Posterior vena cava (tissue), 2 donors: ENCODE measurements at regions of chr1 and their contacts with region 1.

Region 1: DNA sequence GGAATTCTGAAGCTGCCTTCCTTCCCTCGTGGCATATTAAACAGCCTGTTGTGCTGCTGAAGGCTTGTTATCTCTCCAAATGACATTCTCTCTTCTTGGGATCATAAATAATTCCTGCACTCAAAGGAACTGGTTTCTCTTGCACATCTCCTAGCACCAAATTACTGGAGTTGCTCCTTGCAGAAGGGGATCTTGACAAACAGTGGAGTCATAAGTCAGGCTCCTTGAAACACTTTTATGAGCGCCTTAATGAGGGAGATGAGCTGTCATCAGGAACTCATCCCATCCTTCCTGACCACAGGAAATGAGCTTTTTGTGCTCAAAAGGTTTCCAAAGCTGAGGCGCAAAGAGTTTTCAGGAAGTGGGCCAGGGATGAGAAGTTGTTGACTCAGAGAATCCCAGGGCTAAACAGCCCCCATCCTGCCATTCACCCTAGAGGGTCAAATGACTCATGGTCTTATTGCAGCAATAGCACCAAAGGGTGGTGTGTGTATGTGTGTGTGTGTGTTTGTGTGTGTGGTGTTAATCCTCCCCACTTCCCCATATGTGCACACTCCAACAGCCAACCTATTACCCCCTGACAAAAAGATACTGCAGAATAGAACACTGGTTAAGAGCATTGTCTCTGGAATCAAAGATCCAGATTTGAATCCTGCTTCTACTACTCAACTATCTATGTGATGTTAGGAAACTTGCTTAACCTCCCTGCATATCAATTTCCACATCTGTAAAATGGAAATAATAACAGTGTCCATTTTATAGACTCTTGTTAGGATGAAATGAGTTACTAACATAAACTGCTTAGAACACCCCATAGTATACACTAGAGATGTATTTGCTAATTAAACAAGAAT is 2.8 kb upstream of the PHC2 start:
- DNase-seq: no peak

Region 2: DNA sequence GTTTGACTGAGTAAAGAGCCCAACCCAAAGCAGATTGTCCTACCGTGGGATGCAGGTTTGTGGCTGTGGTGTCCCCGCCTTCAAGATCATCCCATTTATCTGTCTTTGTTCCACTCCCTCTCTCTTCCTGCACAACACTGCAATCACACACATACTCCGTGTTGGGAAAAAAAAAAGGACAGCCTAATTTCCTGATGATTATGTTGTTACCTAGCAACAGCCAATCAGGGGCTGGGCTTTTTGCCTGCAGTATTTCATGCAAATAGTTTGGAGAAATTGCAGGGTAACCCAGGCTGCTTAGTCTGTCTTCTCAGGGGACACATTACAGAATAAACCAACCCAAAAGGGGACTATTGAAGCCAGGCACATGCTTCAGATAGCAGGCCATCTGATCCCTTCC is 41.1 kb before region 1 on chr1:
- intact Hi-C with region 1: loop called in 1 of 2 experiments (anchors 1 kb)
- DNase-seq: no peak

Region 3: GRCh38 chr1:33455539-33456501 is 22.1 kb after region 1 on chr1:
- intact Hi-C with region 1: loop called in 1 of 2 experiments (anchors 1 kb)
- DNase-seq: no peak